Activated T-helper 1 cell treated with anti-CD3 and anti-CD28 coated beads, Interleukin-12 subunit alpha, Interleukin-12 subunit beta, Interleukin-2, Interleukin-4 antibody, amounts not matched to agents 30 ng/mL and 10 ng/mL and 1 ng/mL, durations not matched to agents 14 hours and 24 hours and 36 hours (primary cell): ENCODE measurements at regions of chr11 and their contacts with region 1.

Region 1: DNA sequence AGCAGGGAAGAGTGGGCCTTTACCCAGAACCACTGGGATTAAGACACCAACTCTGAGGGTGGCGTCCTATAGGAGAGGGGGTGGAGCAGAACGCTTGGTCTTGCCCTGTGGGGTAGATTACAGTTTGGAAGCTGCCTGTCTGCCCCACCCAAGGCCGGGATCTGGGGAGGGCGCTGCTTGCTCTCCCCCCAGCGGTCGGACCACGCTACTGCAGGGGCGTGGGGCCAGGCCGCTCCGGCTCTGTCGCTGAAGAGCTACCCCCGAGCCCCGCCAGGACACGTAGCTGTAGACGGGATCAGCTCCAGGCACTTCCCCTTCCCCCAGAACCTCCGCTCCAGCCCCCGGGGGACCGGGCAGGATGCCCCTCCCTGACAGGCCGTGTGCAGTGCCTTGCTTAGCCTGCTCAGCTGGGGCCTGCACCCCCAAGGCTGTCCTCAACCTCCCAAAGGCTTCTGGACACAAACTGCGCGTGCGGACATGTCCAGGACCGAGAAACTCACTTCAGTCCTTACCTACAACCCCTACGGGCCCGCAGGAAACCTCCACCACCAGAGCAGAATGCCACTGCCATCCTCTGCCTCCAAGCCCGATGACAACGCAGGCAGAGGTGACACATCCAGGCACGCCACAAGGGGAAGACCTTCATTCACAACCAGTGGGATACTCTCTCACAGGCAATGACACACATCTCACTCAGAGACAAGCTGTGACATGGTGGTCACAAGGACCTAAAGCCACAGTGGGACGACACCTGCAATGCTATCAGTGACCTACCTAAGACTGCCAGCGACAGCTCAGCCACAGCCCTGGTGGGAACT is 3.6 kb downstream of the AHNAK start:
- DNase-seq: peak; percentile 69
- H3K4me3 Mint-ChIP-seq: peak overlapping the region; percentile 97
- H3K27ac Mint-ChIP-seq: peak overlapping the region; percentile 95
- H3K4me1 Mint-ChIP-seq: peaks cover 75% of the 10 kb centered on the region
- H3K27me3 Mint-ChIP-seq: peaks cover 3% of the 10 kb centered on the region

Region 2: GRCh38 chr11:62472012-62472884 is 70.7 kb before region 1 on chr11:
- intact Hi-C with region 1: no loop called
- DNase-seq: no peak
- H3K4me3 Mint-ChIP-seq: no peak overlapping the region
- H3K27ac Mint-ChIP-seq: no peak overlapping the region
- H3K4me1 Mint-ChIP-seq: peaks cover 7% of the 10 kb centered on the region
- H3K27me3 Mint-ChIP-seq: no peaks in the 10 kb centered on the region

Region 3: GRCh38 chr11:62497132-62497915 is 45.6 kb before region 1 on chr11:
- intact Hi-C with region 1: loop called (anchors 5 kb)
- DNase-seq: no peak
- H3K4me3 Mint-ChIP-seq: no peak overlapping the region
- H3K27ac Mint-ChIP-seq: no peak overlapping the region
- H3K4me1 Mint-ChIP-seq: no peaks in the 10 kb centered on the region
- H3K27me3 Mint-ChIP-seq: peaks cover 19% of the 10 kb centered on the region

Region 4: DNA sequence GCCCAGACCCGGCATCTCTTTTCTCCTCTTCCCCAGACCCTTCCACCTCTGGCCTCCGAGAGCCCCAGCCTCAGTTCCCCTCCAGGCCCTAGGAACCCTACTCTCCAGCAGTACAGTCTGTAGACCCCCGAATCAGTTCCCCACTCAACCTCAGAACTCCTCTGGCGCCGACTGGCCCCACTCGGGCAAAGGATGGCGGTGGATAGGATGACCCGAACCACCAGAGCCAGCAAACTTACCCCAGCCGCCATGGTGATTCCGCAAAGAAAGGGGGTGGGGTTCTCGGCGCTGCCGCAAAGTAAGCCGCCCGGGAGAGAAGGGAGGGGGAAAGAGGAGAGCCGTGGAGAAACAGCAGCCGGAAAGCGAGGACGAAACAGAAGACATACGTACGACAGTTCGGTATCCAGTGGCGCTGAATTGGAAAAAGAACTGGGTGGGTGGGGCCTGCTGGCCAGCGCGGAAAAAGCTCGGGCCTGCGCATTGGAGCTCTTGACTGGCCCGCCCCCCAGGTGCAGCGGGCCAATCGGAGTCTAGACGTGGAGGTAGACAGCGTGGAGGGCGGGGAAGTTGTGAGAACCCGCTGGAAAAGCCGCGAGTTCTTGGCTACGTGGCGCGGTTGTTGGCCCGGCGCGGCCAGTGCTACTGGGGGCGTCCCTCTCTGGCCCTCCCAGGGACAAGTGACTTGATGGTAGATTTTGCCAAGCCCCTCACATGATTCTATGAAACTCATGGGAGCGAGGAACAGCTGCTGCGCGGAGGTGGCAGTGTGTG is 30.8 kb after region 1 on chr11 and contains the start of gene EEF1G:
- intact Hi-C with region 1: loop called (anchors 1 kb)
- DNase-seq: peak; percentile 99
- H3K4me3 Mint-ChIP-seq: peak within 1 kb of the TSS; percentile 98
- H3K27ac Mint-ChIP-seq: peak within 1 kb of the TSS; percentile 92
- H3K4me1 Mint-ChIP-seq: peaks cover 37% of the 10 kb centered on the region
- H3K27me3 Mint-ChIP-seq: no peaks in the 10 kb centered on the region
- total RNA-seq, gene EEF1G: 1,154 and 1,169 TPM in 2 replicates